ENCODE measurements at regions of chr13 and their contacts with region 1.

Region 1: DNA sequence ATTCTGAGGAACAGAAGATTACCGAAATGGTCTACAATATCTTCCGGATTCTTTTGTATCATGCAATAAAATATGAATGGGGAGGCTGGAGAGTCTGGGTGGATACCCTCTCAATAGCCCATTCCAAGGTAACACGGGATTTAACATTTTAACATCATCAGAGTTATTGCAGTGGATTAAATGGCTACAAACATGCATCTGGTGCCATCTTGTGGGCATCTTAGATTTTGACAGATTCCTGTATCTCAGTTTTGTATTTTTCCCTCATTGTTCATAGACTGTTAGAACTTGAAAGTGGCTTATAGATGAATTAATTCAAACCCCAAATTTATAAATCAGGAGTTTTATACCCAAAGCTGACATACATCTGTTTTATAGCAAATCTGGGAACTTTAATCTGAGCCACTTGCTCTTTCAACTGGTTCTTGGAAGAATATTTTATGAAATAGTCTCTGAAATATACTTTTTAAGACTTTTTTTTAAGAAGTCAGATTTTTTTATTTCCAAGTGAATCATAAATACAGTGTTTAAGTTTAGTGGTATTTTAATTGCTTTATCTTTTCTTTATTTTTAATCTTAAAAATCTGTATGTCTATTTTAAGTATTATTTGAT is 215.2 kb downstream of the NBEA start:
- DNase-seq: peak in 5 of 9 donors; percentile 20 to 46 (median 30)
- ATAC-seq: no peak
- H3K4me3 ChIP-seq: no peak overlapping the region
- H3K4me3 Mint-ChIP-seq: no peak overlapping the region
- H3K27ac ChIP-seq: no peak overlapping the region
- H3K27ac Mint-ChIP-seq: no peak overlapping the region
- H3K4me1 ChIP-seq: no peaks in the 10 kb centered on the region
- H3K4me1 Mint-ChIP-seq: peaks cover under 1 to 15% (median 4%) of the 10 kb centered on the region in 7 donors
- H3K27me3 ChIP-seq: no peaks in the 10 kb centered on the region
- H3K27me3 Mint-ChIP-seq: peaks cover 0 to 3% (median 0%) of the 10 kb centered on the region in 5 donors

Region 2: GRCh38 chr13:33799950-33800592 is 1357.2 kb before region 1 on chr13:
- CTCF ChIA-PET with region 1: interaction called, 4 read pairs
- POLR2A ChIA-PET with region 1: no interaction called
- intact Hi-C with region 1: loop called in 1 of 2 experiments (anchors 1 kb)
- DNase-seq: peak in 2 of 9 donors; percentile 12 to 13
- ATAC-seq: peak; percentile 46
- H3K4me3 ChIP-seq: no peak overlapping the region
- H3K4me3 Mint-ChIP-seq: peak overlapping the region in 2 of 10 donors; percentile 25 to 54
- H3K27ac ChIP-seq: no peak overlapping the region
- H3K27ac Mint-ChIP-seq: peak overlapping the region in 1 of 9 donors; percentile 5
- H3K4me1 ChIP-seq: no peaks in the 10 kb centered on the region
- H3K4me1 Mint-ChIP-seq: peaks cover 0 to 10% (median 0%) of the 10 kb centered on the region in 7 donors
- H3K27me3 ChIP-seq: no peaks in the 10 kb centered on the region
- H3K27me3 Mint-ChIP-seq: peaks cover 0 to 20% (median 11%) of the 10 kb centered on the region in 5 donors

Region 3: DNA sequence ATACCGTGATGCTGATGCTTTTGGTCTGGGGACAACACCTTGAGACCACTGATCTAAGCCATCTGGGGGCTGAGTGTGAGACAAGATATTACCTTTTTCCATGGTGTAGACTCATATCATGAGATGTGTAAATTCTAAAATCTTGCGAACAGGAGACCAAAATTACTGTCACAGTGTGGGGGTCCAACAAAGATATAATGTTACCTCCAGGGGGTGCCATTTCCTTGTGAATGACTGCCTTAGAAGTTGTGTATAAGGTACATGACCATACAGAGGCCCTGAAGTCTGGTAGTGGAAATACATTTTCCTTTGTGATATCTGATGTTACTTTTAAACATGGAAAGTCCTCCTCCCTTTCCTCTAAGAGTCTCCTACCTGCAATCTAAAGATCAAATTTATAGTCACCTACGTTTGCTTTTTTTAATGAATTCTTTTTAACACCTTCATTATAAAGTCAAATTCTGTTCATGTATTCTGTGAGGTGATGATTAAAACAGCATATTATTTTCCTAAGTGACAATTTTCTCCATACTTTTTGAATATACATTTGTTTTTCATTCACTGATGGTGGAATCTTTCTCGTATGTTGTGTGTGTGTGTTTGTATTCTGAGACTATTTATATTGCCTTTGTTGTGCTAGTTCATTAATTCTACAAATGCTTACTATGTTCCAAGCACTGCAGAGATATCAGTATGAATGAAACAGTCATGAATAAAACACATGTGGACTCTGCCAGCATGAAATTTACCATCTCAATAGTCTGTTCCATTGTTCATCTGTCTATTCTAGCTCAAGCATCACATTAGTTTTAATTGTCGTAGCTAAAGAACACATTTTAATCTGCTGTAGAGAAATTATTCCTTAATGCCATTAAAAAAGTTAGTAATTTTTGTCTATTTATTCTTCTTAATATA is 1225.6 kb before region 1 on chr13:
- CTCF ChIA-PET with region 1: no interaction called
- POLR2A ChIA-PET with region 1: no interaction called
- intact Hi-C with region 1: loop called in 1 of 2 experiments (anchors 2 kb)
- DNase-seq: no peak
- ATAC-seq: no peak
- H3K4me3 ChIP-seq: no peak overlapping the region
- H3K4me3 Mint-ChIP-seq: no peak overlapping the region
- H3K27ac ChIP-seq: no peak overlapping the region
- H3K27ac Mint-ChIP-seq: no peak overlapping the region
- H3K4me1 ChIP-seq: no peaks in the 10 kb centered on the region
- H3K4me1 Mint-ChIP-seq: no peaks in the 10 kb centered on the region
- H3K27me3 ChIP-seq: no peaks in the 10 kb centered on the region
- H3K27me3 Mint-ChIP-seq: no peaks in the 10 kb centered on the region

Region 4: GRCh38 chr13:34611671-34612070 is 545.6 kb before region 1 on chr13:
- CTCF ChIA-PET with region 1: no interaction called
- POLR2A ChIA-PET with region 1: no interaction called
- intact Hi-C with region 1: no loop called
- DNase-seq: no peak
- ATAC-seq: no peak
- H3K4me3 ChIP-seq: no peak overlapping the region
- H3K4me3 Mint-ChIP-seq: no peak overlapping the region
- H3K27ac ChIP-seq: no peak overlapping the region
- H3K27ac Mint-ChIP-seq: no peak overlapping the region
- H3K4me1 ChIP-seq: no peaks in the 10 kb centered on the region
- H3K4me1 Mint-ChIP-seq: no peaks in the 10 kb centered on the region
- H3K27me3 ChIP-seq: peaks cover 0 to under 1% of the 10 kb centered on the region in 2 donors
- H3K27me3 Mint-ChIP-seq: peaks cover 0 to 6% (median 0%) of the 10 kb centered on the region in 5 donors

Region 5: DNA sequence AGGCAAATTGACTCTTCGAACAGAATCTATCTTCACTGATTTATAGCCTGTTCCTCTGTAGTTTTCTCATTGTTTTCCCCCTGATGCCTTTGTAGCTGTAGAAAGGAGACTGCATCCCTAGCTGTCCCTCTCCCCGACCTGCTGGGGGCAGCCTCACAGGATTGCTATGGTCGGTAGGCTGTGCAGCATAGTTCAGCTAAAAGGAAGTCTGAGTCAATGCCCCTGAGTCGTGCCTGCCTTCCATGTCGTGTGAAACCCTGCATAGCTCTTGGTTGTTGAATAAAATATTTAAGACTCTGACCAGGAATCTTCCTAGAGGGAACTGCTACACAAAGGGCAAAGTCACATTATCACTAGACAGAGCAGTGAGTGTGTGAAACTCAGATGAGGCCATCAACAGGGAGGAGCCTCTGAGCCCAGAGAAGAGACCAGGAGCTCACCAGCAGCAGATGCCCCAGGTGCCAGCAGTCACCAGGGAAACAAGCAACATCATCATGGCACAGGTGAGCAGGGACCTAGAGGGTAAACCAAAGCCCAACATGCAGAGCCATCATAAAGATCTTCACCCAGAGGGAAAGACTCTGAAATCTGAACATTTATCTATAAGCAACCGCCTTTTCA is 323.6 kb before region 1 on chr13:
- CTCF ChIA-PET with region 1: no interaction called
- POLR2A ChIA-PET with region 1: no interaction called
- intact Hi-C with region 1: loop called in 1 of 2 experiments (anchors 10 kb)
- DNase-seq: no peak
- ATAC-seq: no peak
- H3K4me3 ChIP-seq: no peak overlapping the region
- H3K4me3 Mint-ChIP-seq: no peak overlapping the region
- H3K27ac ChIP-seq: no peak overlapping the region
- H3K27ac Mint-ChIP-seq: no peak overlapping the region
- H3K4me1 ChIP-seq: no peaks in the 10 kb centered on the region
- H3K4me1 Mint-ChIP-seq: no peaks in the 10 kb centered on the region
- H3K27me3 ChIP-seq: no peaks in the 10 kb centered on the region
- H3K27me3 Mint-ChIP-seq: peaks cover 0 to 25% (median 9%) of the 10 kb centered on the region in 5 donors

Region 6: DNA sequence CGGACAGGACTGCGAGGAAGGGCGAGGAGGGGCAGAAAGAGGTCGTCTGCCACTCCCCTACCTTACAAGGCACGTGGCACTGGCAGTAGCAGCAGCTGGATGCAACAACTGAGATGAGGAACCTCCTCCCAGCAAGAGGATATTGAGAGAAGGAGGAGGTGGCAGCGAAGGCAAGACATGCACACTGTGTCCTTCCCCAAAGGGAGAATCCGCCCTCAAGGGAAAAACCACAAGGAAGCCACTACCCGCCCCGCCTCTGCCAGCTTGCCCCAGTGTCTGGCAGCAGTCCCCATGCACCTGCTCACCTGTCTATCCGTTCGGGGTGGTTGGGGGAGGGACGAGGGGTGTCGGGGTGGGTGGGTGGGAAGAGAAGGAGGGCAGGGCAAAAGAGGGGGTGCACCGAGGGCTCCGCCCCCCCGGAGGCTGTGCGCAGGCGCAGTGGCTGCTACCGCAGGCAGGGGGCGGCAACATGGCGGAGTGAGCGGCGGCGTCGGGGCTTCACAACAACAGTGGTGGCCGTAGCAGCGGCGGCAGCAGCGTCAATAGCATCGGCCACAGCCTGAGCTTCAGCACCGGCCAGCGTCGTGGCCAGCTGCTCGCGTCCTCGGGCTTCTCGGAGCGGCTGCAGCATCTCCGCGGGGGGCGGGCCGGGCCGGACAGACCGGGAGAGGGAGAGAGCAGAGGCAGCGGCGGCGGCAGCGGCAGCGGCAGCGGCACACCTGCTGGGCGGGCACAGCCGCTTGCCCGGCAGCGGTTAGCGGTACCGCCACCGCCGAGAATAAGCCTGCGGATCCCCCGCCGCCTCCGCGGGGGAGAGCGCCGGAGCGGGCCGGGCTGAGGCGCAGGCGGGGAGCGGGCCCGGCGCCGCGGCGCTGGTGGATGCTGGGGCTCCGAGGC is 215.2 kb before region 1 on chr13 and contains the start of gene NBEA:
- CTCF ChIA-PET with region 1: no interaction called
- POLR2A ChIA-PET with region 1: no interaction called
- intact Hi-C with region 1: loop called (anchors 2 to 5 kb)
- DNase-seq: peak; percentile 73 to 90 (median 85)
- ATAC-seq: peak; percentile 82
- H3K4me3 ChIP-seq: peak within 1 kb of the TSS; percentile 43
- H3K4me3 Mint-ChIP-seq: peak within 1 kb of the TSS; percentile 72 to 94 (median 90)
- H3K27ac ChIP-seq: peak within 1 kb of the TSS; percentile 55
- H3K27ac Mint-ChIP-seq: peak within 1 kb of the TSS in 8 of 9 donors; percentile 18 to 85 (median 78)
- H3K4me1 ChIP-seq: peaks cover 0 to 17% of the 10 kb centered on the region in 2 donors
- H3K4me1 Mint-ChIP-seq: peaks cover 15 to 35% (median 28%) of the 10 kb centered on the region in 7 donors
- H3K27me3 ChIP-seq: peaks cover 0 to 9% of the 10 kb centered on the region in 2 donors
- H3K27me3 Mint-ChIP-seq: peaks cover 37 to 58% (median 47%) of the 10 kb centered on the region in 5 donors
- total RNA-seq, gene NBEA: 0.15 to 6.3 (median 4.3) TPM

Region 7: DNA sequence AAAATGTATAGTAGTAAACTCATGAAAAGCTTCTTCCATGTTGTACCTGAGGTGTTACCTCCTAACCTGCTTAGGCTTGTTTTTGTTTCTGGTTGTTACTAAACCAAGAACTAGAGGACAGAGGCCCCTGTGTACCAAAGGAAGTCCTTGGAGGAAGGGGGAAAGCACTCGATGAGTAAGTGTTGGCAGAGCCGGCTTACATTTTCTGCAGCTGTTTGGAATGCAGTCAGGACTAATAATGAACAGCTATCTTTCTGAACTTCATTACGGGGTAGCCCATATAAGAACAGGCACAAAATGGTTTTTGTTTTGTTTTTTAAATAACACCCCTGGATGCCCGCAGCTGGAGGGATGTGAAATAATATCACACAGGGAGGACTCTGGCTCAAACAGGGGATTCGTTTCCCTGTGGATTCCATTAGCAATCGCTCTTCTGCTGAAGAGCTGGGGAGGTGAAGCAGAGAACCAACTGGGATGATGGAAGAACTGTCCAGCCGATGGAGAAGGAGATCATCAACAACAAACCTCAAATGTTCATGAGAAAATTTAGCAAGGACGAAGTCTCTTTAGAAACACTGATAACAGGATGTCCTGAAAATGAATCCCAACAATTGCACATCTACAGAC is 533.4 kb after region 1 on chr13:
- CTCF ChIA-PET with region 1: no interaction called
- POLR2A ChIA-PET with region 1: no interaction called
- intact Hi-C with region 1: no loop called
- DNase-seq: no peak
- ATAC-seq: no peak
- H3K4me3 ChIP-seq: no peak overlapping the region
- H3K4me3 Mint-ChIP-seq: no peak overlapping the region
- H3K27ac ChIP-seq: no peak overlapping the region
- H3K27ac Mint-ChIP-seq: no peak overlapping the region
- H3K4me1 ChIP-seq: no peaks in the 10 kb centered on the region
- H3K4me1 Mint-ChIP-seq: peaks cover 0 to 3% (median 0%) of the 10 kb centered on the region in 7 donors
- H3K27me3 ChIP-seq: no peaks in the 10 kb centered on the region
- H3K27me3 Mint-ChIP-seq: peaks cover 0 to 5% (median 0%) of the 10 kb centered on the region in 5 donors

Measured in naive thymus-derived CD4-positive, alpha-beta T cell (primary cell).